ENCODE measurements at regions of chr2 and their contacts with region 1.

Region 1: GRCh38 chr2:136112317-136113208 is 5.4 kb downstream of the CXCR4 start:
- DNase-seq: no peak
- ATAC-seq: no peak
- H3K4me3 ChIP-seq: no peak overlapping the region
- H3K27ac ChIP-seq: peak overlapping the region in 1 of 10 donors; percentile 4
- H3K4me1 ChIP-seq: peaks cover 0 to 68% (median 13%) of the 10 kb centered on the region in 9 donors
- H3K27me3 ChIP-seq: peaks cover 0 to 38% (median 19%) of the 10 kb centered on the region in 7 donors
- CTCF ChIP-seq: no peak

Region 2: DNA sequence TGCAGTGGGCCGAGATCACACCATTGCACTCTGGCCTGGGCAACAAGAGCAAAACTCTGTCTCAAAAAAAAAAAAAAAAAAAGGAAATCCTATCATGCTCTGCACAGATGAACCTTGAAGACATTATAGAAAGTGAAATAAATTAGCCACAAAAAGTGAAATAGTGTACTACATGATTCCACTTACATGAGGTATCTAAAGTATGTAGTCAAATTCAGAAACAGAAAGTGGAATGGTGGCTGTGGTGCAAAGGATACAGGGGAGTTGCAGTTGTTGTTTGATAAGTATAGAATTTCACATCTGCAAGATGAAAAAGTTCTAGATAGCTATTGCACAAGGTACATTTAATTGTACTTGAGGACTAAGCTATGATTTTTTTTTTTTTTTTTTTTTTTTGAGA is 586.8 kb before region 1 on chr2:
- intact Hi-C with region 1: no loop called
- DNase-seq: no peak
- ATAC-seq: no peak
- H3K4me3 ChIP-seq: no peak overlapping the region
- H3K27ac ChIP-seq: no peak overlapping the region
- H3K4me1 ChIP-seq: peaks cover 0 to 7% (median 5%) of the 10 kb centered on the region in 9 donors
- H3K27me3 ChIP-seq: no peaks in the 10 kb centered on the region
- CTCF ChIP-seq: no peak

Region 3: GRCh38 chr2:135797497-135798274 is 314.9 kb before region 1 on chr2:
- intact Hi-C with region 1: no loop called
- DNase-seq: peak; percentile 63 to 65
- ATAC-seq: peak; percentile 67 to 90 (median 84)
- H3K4me3 ChIP-seq: no peak overlapping the region
- H3K27ac ChIP-seq: no peak overlapping the region
- H3K4me1 ChIP-seq: peaks cover 0 to 15% (median 5%) of the 10 kb centered on the region in 9 donors
- H3K27me3 ChIP-seq: no peaks in the 10 kb centered on the region
- CTCF ChIP-seq: peak; percentile 72 to 90 (median 88)

Region 4: DNA sequence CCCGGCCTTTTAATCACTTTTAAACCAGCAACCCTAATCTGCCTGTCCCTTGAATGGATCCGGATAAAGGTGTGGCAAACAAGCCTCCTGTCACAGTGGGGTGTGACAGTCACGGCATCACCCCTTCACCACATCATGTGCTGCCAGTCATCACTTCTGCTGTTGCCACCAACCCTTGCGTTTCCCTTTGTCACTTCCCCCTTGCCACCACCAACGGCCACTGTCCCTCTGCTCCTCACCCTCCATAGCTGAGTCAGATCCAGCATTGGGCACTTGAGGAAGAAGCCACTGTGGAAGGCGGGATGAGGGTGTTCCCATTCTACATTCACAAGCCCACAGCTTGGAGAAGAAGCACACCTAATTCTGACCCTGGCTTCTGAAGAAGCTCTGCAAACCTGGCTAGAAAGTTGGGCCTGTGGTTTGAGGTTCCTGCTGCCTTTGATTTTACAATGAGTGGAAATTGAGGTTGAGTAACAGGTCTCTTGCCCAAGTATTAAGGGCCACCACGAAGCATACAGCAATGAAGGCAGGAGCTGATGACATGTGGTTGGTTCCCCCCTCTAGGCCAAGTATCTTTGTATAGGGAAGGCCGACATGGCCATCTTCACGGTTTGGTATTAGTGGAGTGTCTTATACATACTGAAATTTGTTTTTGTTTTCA is 104.2 kb before region 1 on chr2:
- intact Hi-C with region 1: loop called in 3 of 10 experiments (anchors 5 to 10 kb)
- DNase-seq: peak; percentile 29 to 33
- ATAC-seq: peak in 7 of 8 donors; percentile 43 to 86 (median 74)
- H3K4me3 ChIP-seq: no peak overlapping the region
- H3K27ac ChIP-seq: peak overlapping the region in 1 of 10 donors; percentile 87
- H3K4me1 ChIP-seq: peaks cover 0 to 54% (median 34%) of the 10 kb centered on the region in 9 donors
- H3K27me3 ChIP-seq: no peaks in the 10 kb centered on the region
- CTCF ChIP-seq: no peak